ENCODE measurements at regions of chr16 and their contacts with region 1.

Region 1: DNA sequence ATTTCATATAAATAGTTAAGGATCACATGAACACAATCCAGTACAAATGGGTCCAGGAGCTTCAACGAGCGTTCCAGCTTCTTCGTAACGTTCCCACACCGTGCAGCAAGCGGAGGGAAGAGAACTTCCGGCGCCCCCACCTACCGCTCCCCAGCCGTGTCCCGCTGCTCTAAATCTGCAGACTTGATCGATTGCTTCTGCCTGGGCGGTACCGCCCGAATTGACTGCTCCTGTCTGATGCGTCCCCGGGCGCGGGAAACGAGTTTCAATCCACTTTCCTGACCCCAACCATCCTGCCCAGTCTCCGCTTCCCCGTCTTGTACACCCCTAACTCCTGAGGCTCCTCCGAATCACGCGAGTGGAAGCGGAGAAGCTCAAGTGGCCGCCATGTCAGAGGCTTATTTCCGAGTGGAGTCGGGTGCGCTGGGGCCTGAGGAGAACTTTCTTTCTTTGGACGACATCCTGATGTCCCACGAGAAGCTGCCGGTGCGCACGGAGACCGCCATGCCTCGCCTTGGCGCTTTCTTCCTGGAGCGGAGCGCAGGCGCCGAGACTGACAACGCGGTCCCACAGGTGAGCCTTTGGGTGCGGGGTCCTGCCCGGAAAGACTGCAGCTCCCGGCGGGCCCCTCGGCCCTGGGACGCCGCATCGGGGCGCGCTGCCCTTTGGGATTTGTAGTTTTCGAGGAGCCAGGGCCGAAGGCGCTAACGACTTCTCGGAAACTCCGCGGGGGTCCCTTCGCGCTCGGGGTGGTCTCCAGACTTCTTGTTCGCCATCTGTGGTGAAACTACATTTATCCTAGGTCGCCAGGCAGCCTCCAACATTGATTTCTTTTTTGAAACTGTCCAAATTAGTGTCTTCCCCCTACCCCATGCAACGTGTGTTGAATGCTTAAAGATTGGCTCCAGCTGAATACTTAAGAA is at the start of gene GINS3:
- DNase-seq: peak; percentile 87
- ATAC-seq: peak; percentile 95
- H3K4me3 ChIP-seq: peak within 1 kb of the TSS; percentile 42 to 99 (median 78)
- H3K4me3 Mint-ChIP-seq: peak within 1 kb of the TSS; percentile 93
- H3K27ac ChIP-seq: peak within 1 kb of the TSS; percentile 66 to 75
- H3K27ac Mint-ChIP-seq: peak within 1 kb of the TSS; percentile 86
- H3K4me1 ChIP-seq: peaks cover 6 to 11% of the 10 kb centered on the region in 2 donors
- H3K4me1 Mint-ChIP-seq: peaks cover 16% of the 10 kb centered on the region
- H3K27me3 ChIP-seq: no peaks in the 10 kb centered on the region
- H3K27me3 Mint-ChIP-seq: peaks cover 4% of the 10 kb centered on the region
- CTCF ChIP-seq: no peak
- total RNA-seq, gene GINS3: 2.3 and 2.9 TPM in 2 replicates

Region 2: GRCh38 chr16:58243528-58244004 is 148.9 kb before region 1 on chr16:
- CTCF ChIA-PET with region 1: no interaction called
- POLR2A ChIA-PET with region 1: no interaction called
- intact Hi-C with region 1: loop called (anchors 5 kb)
- DNase-seq: peak; percentile 80
- ATAC-seq: peak; percentile 95
- H3K4me3 ChIP-seq: no peak overlapping the region
- H3K4me3 Mint-ChIP-seq: peak overlapping the region; percentile 64
- H3K27ac ChIP-seq: peak overlapping the region in 1 of 2 donors; percentile 5
- H3K27ac Mint-ChIP-seq: peak overlapping the region; percentile 87
- H3K4me1 ChIP-seq: peaks cover 12 to 17% of the 10 kb centered on the region in 2 donors
- H3K4me1 Mint-ChIP-seq: peaks cover 24% of the 10 kb centered on the region
- H3K27me3 ChIP-seq: no peaks in the 10 kb centered on the region
- H3K27me3 Mint-ChIP-seq: peaks cover 11% of the 10 kb centered on the region
- CTCF ChIP-seq: peak; percentile 22

Region 3: DNA sequence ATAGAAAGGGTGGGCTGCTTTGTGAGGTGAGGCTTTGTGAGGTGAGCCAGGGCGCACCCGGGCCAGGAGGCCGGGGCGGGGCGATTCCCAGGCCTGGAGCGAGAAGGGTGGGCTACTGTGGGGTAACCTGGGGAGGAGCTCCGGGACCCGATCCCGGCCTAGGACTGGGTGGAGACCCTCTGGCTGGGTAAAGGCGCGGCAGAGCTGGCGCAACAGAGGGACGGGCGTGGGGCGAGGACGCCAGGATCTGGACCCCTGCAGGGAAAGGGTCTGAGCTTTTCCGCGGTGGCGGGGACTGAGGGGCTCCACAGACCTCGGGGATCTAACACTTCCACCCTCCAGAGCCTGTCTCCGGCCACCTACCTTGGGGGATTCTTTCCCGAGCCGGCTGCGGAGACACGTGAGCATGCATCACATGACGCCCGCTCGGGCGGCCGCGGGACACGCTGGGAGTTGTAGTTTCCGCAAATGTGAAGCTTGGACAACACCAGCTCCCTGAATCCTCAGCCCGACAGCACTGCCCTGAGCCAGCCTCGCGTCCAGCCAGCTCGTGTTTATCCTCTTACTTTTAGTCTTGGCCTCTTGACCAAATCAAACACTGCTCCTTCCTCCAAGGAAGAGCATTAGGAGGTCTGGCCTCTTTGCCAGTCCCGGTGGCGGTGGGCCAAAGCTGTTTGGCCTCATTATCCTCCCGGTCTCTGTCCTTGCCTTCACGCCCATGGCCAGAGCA is 292.0 kb after region 1 on chr16 and contains the start of gene SLC38A7:
- CTCF ChIA-PET with region 1: no interaction called
- POLR2A ChIA-PET with region 1: no interaction called
- intact Hi-C with region 1: loop called (anchors 2 kb)
- DNase-seq: peak; percentile 81
- ATAC-seq: peak; percentile 89
- H3K4me3 ChIP-seq: peak within 1 kb of the TSS; percentile 30 to 98 (median 74)
- H3K4me3 Mint-ChIP-seq: peak within 1 kb of the TSS; percentile 93
- H3K27ac ChIP-seq: peak within 1 kb of the TSS; percentile 11 to 80
- H3K27ac Mint-ChIP-seq: peak within 1 kb of the TSS; percentile 80
- H3K4me1 ChIP-seq: peaks cover 10 to 17% of the 10 kb centered on the region in 2 donors
- H3K4me1 Mint-ChIP-seq: peaks cover 17% of the 10 kb centered on the region
- H3K27me3 ChIP-seq: no peaks in the 10 kb centered on the region
- H3K27me3 Mint-ChIP-seq: peaks cover 1% of the 10 kb centered on the region
- CTCF ChIP-seq: no peak
- total RNA-seq, gene SLC38A7: 18.0 and 23.9 TPM in 2 replicates

Measured in B cell (primary cell).